Mammary epithelial cell (primary cell): ENCODE measurements at regions of chr2 and their contacts with region 1.

Region 1: DNA sequence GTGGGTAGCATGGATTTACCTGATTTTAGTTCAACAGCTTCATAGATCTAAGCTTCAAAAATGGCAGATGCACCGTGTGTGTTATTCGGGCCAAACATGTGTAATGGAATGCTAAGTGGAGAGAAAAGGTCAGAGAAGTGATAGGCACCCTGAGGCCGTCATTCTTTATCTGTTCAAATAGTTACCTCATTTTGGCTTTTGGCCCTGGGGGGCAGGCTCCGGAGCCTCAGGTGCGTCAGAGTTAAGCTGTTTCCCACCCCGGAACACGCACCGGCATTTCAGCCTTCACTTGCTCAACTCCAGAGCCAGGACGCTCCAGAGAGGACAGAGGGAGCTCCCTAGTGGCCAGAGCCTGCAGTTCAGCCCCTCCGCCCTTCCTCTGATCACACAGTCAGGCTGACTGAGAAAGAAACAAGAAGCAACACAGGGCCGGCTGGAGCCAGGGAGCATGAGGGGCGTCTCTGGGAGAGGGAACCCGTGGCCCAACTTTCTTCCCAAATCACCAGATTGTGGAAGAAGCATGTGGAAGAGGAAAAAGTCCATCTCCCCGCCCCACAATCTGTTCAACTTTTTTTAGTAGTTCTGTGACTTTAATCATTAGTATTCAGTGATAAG is 135.2 kb upstream of the EPC2 start:
- DNase-seq: peak; percentile 76
- H3K4me3 ChIP-seq: peak overlapping the region; percentile 24 to 34 (median 33)
- H3K27ac ChIP-seq: no peak overlapping the region
- H3K4me1 ChIP-seq: no peaks in the 10 kb centered on the region
- H3K27me3 ChIP-seq: no peaks in the 10 kb centered on the region
- CTCF ChIP-seq: peak; percentile 93 to 99

Region 2: DNA sequence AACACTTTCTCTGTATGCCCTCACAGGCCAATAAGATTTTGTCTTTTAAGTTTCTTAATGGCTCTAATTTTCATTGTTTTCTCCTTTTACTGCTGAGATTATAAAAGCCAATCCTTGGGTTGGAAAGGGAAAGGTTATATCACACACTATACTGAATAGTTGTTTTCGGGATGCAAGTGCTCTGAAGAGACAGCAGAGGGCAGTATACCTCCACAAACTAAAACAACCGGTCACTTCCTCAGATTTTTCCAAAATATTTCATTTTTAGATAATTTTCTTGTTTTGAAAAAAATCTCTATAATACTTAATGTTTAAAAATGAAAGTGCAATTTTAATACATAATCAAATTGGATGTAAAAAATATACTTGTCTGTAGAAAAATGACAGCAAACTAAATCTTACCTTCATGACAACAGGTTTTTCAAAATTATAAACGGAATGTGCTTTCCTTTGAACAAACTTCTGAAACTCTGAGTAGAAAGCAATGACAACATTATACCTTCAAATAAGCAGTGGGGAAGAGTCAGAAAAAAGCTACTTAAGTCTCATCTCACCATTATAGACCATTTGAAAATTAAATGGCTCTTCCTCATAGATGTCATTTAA is 571.5 kb before region 1 on chr2:
- CTCF ChIA-PET with region 1: interaction called, 3 read pairs
- dilution Hi-C with region 1: no loop called
- in situ Hi-C with region 1: no loop called
- intact Hi-C with region 1: loop called (anchors 1 kb)
- DNase-seq: peak; percentile 3
- H3K4me3 ChIP-seq: no peak overlapping the region
- H3K27ac ChIP-seq: no peak overlapping the region
- H3K4me1 ChIP-seq: no peaks in the 10 kb centered on the region
- H3K27me3 ChIP-seq: no peaks in the 10 kb centered on the region
- CTCF ChIP-seq: peak; percentile 76 to 88

Region 3: GRCh38 chr2:147989809-147990403 is 519.5 kb before region 1 on chr2:
- CTCF ChIA-PET with region 1: interaction called, 5 read pairs
- dilution Hi-C with region 1: no loop called
- in situ Hi-C with region 1: loop called (anchors 25 kb)
- intact Hi-C with region 1: loop called (anchors 1 kb)
- DNase-seq: peak; percentile 10
- H3K4me3 ChIP-seq: no peak overlapping the region
- H3K27ac ChIP-seq: no peak overlapping the region
- H3K4me1 ChIP-seq: no peaks in the 10 kb centered on the region
- H3K27me3 ChIP-seq: no peaks in the 10 kb centered on the region
- CTCF ChIP-seq: peak; percentile 31 to 57

Region 4: GRCh38 chr2:148201075-148202004 is 308.1 kb before region 1 on chr2:
- CTCF ChIA-PET with region 1: no interaction called
- dilution Hi-C with region 1: no loop called
- in situ Hi-C with region 1: no loop called
- intact Hi-C with region 1: loop called (anchors 5 kb)
- DNase-seq: peak; percentile 37
- H3K4me3 ChIP-seq: no peak overlapping the region
- H3K27ac ChIP-seq: no peak overlapping the region
- H3K4me1 ChIP-seq: no peaks in the 10 kb centered on the region
- H3K27me3 ChIP-seq: no peaks in the 10 kb centered on the region
- CTCF ChIP-seq: peak; percentile 48 to 64

Region 5: GRCh38 chr2:148410899-148411298 is 98.5 kb before region 1 on chr2:
- CTCF ChIA-PET with region 1: no interaction called
- dilution Hi-C with region 1: no loop called
- in situ Hi-C with region 1: no loop called
- intact Hi-C with region 1: no loop called
- DNase-seq: no peak
- H3K4me3 ChIP-seq: no peak overlapping the region
- H3K27ac ChIP-seq: no peak overlapping the region
- H3K4me1 ChIP-seq: no peaks in the 10 kb centered on the region
- H3K27me3 ChIP-seq: no peaks in the 10 kb centered on the region
- CTCF ChIP-seq: no peak

Region 6: DNA sequence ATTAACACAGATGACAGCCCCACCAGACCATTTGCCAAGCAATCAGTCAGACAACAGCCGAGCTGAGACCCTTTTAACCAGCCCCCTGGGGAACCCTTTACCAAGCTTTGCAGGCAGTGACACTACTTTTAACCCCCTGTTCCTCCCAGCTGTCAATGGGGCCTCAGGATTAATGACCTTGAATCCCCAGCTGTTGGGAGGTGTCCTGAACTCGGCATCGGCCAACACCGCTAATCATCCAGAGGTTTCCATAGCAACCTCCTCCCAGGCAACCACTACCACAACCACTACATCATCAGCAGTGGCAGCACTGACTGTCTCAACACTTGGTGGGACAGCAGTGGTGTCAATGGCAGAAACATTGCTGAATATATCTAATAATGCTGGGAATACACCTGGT is 25.7 kb before region 1 on chr2:
- CTCF ChIA-PET with region 1: interaction called, 11 read pairs
- dilution Hi-C with region 1: no loop called
- in situ Hi-C with region 1: no loop called
- intact Hi-C with region 1: no loop called
- DNase-seq: no peak
- H3K4me3 ChIP-seq: no peak overlapping the region
- H3K27ac ChIP-seq: no peak overlapping the region
- H3K4me1 ChIP-seq: no peaks in the 10 kb centered on the region
- H3K27me3 ChIP-seq: no peaks in the 10 kb centered on the region
- CTCF ChIP-seq: no peak

Region 7: GRCh38 chr2:148989882-148990493 is 480.6 kb after region 1 on chr2:
- CTCF ChIA-PET with region 1: no interaction called
- dilution Hi-C with region 1: no loop called
- in situ Hi-C with region 1: no loop called
- intact Hi-C with region 1: loop called (anchors 1 kb)
- DNase-seq: peak; percentile 53
- H3K4me3 ChIP-seq: no peak overlapping the region
- H3K27ac ChIP-seq: no peak overlapping the region
- H3K4me1 ChIP-seq: no peaks in the 10 kb centered on the region
- H3K27me3 ChIP-seq: no peaks in the 10 kb centered on the region
- CTCF ChIP-seq: peak; percentile 66 to 80